ENCODE measurements at regions of chr11 and their contacts with region 1.

Region 1: DNA sequence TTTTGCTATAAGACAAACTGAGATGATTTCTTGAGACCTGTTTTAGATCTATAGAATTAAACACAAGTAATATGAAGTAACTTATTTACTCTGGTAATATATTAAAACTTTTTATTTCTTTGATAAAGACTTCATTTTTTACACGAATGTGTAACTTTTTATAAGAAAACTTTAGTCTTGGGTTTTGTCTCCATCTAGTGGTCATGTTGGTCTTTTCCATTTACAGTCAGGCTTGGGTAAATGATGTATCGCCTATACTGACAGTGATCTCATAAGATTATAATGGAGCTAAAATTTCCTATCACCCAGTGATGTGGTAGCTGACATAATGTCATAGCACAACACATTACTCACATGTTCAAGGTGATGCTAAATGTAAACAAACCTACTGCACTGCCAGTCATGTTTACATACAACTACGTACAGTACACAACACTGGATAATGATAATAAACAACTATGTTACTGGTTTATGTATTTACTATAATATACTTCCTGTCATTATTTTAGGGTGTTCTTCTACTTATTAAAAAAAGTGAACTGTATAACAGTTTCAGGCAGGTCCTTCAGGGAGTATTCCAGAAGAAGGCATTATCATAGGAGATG is 7.5 kb upstream of the C11orf97 start:
- DNase-seq: no peak
- ATAC-seq: peak; percentile 66
- H3K4me3 Mint-ChIP-seq: no peak overlapping the region
- H3K27ac Mint-ChIP-seq: no peak overlapping the region
- H3K4me1 Mint-ChIP-seq: no peaks in the 10 kb centered on the region
- H3K27me3 Mint-ChIP-seq: no peaks in the 10 kb centered on the region
- CTCF ChIP-seq: peak; percentile 69

Region 2: GRCh38 chr11:93895106-93895862 is 609.5 kb before region 1 on chr11:
- CTCF ChIA-PET with region 1: interaction called, 9 read pairs
- POLR2A ChIA-PET with region 1: no interaction called
- intact Hi-C with region 1: loop called (anchors 10 kb)
- DNase-seq: peak; percentile 20
- ATAC-seq: peak; percentile 61
- H3K4me3 Mint-ChIP-seq: no peak overlapping the region
- H3K27ac Mint-ChIP-seq: no peak overlapping the region
- H3K4me1 Mint-ChIP-seq: no peaks in the 10 kb centered on the region
- H3K27me3 Mint-ChIP-seq: peaks cover 31% of the 10 kb centered on the region
- CTCF ChIP-seq: peak; percentile 61

Region 3: GRCh38 chr11:93921695-93922468 is 582.9 kb before region 1 on chr11:
- CTCF ChIA-PET with region 1: interaction called, 3 read pairs
- POLR2A ChIA-PET with region 1: no interaction called
- intact Hi-C with region 1: loop called (anchors 10 kb)
- DNase-seq: peak; percentile 44
- ATAC-seq: peak; percentile 60
- H3K4me3 Mint-ChIP-seq: no peak overlapping the region
- H3K27ac Mint-ChIP-seq: no peak overlapping the region
- H3K4me1 Mint-ChIP-seq: no peaks in the 10 kb centered on the region
- H3K27me3 Mint-ChIP-seq: peaks cover 27% of the 10 kb centered on the region
- CTCF ChIP-seq: peak; percentile 58

Region 4: DNA sequence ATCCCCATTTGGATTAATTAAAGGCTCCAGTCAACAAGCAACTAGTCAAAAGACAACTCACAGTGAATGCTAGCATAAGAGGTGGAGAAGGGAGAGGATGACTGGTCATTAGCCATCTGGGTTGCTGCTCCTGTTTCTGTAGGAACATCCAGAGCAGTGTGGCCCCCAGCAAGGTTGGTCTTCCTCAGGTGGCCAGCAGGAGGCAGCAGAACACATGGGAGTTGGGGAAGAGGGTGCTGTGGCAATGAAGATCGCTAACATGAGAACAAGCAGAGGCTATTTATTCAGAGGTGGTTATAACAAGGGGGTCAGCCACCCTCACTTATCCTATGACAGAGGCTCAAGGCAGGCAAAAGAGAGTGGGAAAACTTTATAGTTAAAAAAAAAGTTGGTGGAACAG is 179.1 kb before region 1 on chr11:
- CTCF ChIA-PET with region 1: no interaction called
- POLR2A ChIA-PET with region 1: no interaction called
- intact Hi-C with region 1: loop called (anchors 10 kb)
- DNase-seq: peak; percentile 61
- ATAC-seq: peak; percentile 56
- H3K4me3 Mint-ChIP-seq: no peak overlapping the region
- H3K27ac Mint-ChIP-seq: no peak overlapping the region
- H3K4me1 Mint-ChIP-seq: no peaks in the 10 kb centered on the region
- H3K27me3 Mint-ChIP-seq: no peaks in the 10 kb centered on the region
- CTCF ChIP-seq: peak; percentile 37

Region 5: GRCh38 chr11:94400839-94401772 is 103.7 kb before region 1 on chr11 and contains the start of gene GPR83:
- CTCF ChIA-PET with region 1: no interaction called
- POLR2A ChIA-PET with region 1: no interaction called
- intact Hi-C with region 1: no loop called
- DNase-seq: peak; percentile 2
- ATAC-seq: peak; percentile 24
- H3K4me3 Mint-ChIP-seq: no peak within 1 kb of the TSS
- H3K27ac Mint-ChIP-seq: no peak within 1 kb of the TSS
- H3K4me1 Mint-ChIP-seq: peaks cover 6% of the 10 kb centered on the region
- H3K27me3 Mint-ChIP-seq: peaks cover 46% of the 10 kb centered on the region
- CTCF ChIP-seq: no peak
- total RNA-seq, gene GPR83: 0.07 to 0.11 TPM

Region 6: DNA sequence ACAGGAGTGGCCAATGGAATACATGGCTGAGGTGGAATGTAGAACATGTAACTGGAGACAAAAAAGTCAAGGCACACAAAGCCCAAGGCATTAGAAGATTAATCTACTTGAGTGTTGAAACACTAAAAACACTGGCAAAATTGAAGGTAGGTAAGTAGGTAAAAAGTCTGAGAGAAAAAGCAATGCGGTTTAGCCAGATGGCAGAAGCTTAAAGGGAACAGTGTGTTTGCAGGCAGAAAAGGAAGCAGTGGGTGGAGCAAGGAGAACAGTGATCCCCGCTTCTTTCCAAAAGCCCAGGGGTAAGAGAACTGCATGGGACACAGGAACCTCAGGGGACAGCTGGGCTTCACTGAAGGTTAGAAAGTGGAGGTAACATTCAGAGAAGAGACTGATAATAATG is 27.2 kb before region 1 on chr11:
- CTCF ChIA-PET with region 1: no interaction called
- POLR2A ChIA-PET with region 1: no interaction called
- intact Hi-C with region 1: no loop called
- DNase-seq: no peak
- ATAC-seq: no peak
- H3K4me3 Mint-ChIP-seq: no peak overlapping the region
- H3K27ac Mint-ChIP-seq: no peak overlapping the region
- H3K4me1 Mint-ChIP-seq: peaks cover 22% of the 10 kb centered on the region
- H3K27me3 Mint-ChIP-seq: no peaks in the 10 kb centered on the region
- CTCF ChIP-seq: no peak

Region 7: GRCh38 chr11:94539420-94539819 is 34.6 kb after region 1 on chr11:
- CTCF ChIA-PET with region 1: no interaction called
- POLR2A ChIA-PET with region 1: no interaction called
- intact Hi-C with region 1: no loop called
- DNase-seq: no peak
- ATAC-seq: no peak
- H3K4me3 Mint-ChIP-seq: no peak overlapping the region
- H3K27ac Mint-ChIP-seq: no peak overlapping the region
- H3K4me1 Mint-ChIP-seq: peaks cover 8% of the 10 kb centered on the region
- H3K27me3 Mint-ChIP-seq: peaks cover 12% of the 10 kb centered on the region
- CTCF ChIP-seq: no peak